ENCODE measurements at regions of chr1 and their contacts with region 1.

Region 1: DNA sequence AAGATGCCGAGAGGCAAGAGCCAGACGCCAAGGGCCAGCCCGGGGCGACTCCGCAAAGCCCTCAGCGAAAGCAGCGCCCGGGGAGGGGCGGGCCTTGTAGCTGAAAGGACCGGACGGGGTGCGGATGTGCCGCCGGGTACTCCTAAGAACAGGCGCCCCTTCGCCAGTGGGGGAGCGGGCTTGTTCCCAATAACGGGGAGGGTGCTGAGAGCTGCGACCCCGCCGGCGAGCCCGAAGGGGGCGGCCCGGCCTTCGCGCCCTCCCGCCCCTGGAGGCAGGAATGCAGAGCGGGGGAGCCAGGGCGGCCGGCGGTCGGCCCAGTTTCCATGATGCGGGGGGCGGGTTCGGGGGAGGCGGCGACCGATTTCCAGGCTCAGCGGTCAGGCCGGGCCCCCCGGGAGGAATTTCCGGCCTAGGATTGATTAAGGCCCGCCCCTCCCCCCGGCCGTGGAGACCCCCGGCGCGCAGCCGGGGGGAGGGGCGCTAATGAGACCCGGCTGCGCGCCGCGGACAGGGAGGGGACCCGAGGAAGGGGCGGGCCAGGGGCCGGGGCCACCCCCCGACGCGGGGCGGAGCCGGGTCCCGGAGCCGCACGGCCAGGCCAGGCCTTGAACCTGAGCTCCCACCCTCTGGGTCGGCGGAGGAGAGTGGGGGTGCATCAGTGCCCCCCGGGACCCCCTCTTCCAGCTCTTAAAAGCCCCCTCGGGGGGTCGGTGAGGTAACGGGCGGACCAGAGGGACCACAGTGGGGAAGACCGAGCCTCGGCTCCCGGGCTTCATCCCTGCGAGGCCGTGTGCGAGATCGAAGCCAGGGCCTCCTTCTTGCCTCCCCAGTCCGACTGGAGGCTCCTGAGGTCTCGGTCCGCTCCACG is 898 bp upstream of the TMEM200B start:
- DNase-seq: no peak
- H3K4me3 ChIP-seq: peak overlapping the region; percentile 79
- H3K27me3 ChIP-seq: 0 out of 2 replicates have a peak, but pooled peaks cover 2% of the 10 kb centered on the region
- CTCF ChIP-seq: peak; percentile 69

Region 2: GRCh38 chr1:29113413-29114117 is 11.0 kb before region 1 on chr1:
- CTCF ChIA-PET with region 1: interaction called, 12 read pairs
- POLR2A ChIA-PET with region 1: no interaction called
- DNase-seq: no peak
- H3K4me3 ChIP-seq: no peak overlapping the region
- H3K27me3 ChIP-seq: no peaks in the 10 kb centered on the region
- CTCF ChIP-seq: no peak

Region 3: DNA sequence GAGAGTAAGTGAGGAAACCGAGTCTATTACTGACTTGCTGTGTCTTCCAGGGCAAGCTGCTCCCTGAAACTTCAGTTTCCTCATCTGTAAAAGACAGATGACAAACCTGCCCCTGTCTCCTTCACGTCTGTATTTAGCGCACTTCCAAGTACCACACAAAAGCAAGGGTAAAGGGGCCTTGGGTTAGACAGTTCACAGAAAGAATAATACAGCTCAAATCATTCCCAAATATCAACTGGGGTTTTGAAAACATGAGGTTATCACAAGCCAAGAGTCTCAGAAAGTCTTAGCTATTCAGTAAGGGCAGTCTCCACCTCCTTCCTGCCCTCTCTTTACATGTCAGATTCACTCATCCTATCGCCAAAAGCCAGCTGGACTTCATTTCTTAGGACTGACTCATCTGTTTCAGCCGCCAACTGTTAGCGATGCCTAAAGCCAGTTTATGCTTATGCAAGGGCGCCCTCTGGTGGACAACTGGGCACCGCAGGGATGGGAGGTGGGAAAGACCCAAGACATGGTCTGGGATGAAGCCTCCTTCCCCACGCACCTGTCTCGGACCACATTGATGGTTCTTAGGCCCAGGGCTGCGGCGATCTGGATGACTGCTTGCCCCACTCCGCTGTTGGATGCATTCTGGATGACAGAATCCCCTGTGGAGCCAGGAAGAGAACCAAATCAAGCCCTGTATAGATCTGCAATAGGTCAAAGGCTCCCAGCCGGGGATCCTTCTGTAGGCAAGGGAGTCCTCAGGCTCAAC is 78.2 kb after region 1 on chr1:
- CTCF ChIA-PET with region 1: interaction called, 16 read pairs
- POLR2A ChIA-PET with region 1: interaction called, 3 read pairs
- DNase-seq: peak; percentile 88
- H3K4me3 ChIP-seq: no peak overlapping the region
- H3K27me3 ChIP-seq: no peaks in the 10 kb centered on the region
- CTCF ChIP-seq: peak; percentile 96

Region 4: DNA sequence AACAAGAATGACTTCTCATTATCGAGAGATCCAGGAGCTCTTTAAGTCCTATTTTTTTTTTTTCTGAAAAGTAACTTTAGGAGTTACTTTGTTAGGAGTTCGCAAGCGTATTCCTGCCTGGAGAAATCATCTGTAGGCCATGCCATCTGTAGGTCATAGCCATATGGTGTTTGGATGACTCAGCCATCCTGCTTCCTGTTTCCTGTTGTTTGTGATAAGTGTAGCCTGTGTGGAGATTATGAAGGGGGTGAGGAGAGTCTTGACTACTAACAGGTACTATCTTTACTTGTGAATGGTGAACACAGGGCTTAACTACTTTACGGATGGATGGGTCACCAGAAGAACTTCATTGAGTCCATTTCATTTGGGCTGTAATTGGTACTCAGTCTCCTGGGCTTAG is 439.0 kb after region 1 on chr1:
- CTCF ChIA-PET with region 1: no interaction called
- POLR2A ChIA-PET with region 1: no interaction called
- DNase-seq: no peak
- H3K4me3 ChIP-seq: no peak overlapping the region
- H3K27me3 ChIP-seq: no peaks in the 10 kb centered on the region
- CTCF ChIP-seq: no peak